ENCODE measurements at regions of chr16 and their contacts with region 1.

Region 1: DNA sequence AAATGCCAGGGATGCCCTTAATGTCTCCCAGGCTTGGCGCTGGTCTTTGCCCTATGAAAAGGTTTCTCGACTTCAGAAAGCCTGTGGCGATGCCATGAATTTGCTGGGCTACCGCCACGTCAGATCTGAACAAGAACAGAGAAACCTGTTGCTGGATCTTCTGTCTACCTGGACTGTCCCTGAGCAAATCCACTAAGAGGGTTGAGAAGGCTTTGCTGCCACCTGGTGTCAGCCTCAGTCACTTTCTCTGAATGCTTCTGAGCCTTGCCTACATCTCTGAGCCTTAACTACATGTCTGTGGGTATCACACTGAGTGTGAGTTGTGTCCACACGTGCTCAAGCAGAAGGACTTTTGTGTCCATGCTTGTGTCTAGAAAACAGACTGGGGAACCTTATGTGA is 11.4 kb downstream of the CHST4 start:
- DNase-seq: peak; percentile 69
- ATAC-seq: peak; percentile 76
- H3K4me3 Mint-ChIP-seq: no peak overlapping the region
- H3K27ac Mint-ChIP-seq: no peak overlapping the region
- H3K4me1 Mint-ChIP-seq: no peaks in the 10 kb centered on the region
- H3K27me3 Mint-ChIP-seq: peaks cover 4% of the 10 kb centered on the region
- CTCF ChIP-seq: peak; percentile 49

Region 2: GRCh38 chr16:71552698-71553451 is 15.2 kb after region 1 on chr16:
- CTCF ChIA-PET with region 1: interaction called, 12 read pairs
- POLR2A ChIA-PET with region 1: no interaction called
- intact Hi-C with region 1: no loop called
- DNase-seq: no peak
- ATAC-seq: no peak
- H3K4me3 Mint-ChIP-seq: no peak overlapping the region
- H3K27ac Mint-ChIP-seq: no peak overlapping the region
- H3K4me1 Mint-ChIP-seq: no peaks in the 10 kb centered on the region
- H3K27me3 Mint-ChIP-seq: peaks cover 8% of the 10 kb centered on the region
- CTCF ChIP-seq: no peak

Region 3: GRCh38 chr16:71572497-71573116 is 35.0 kb after region 1 on chr16:
- CTCF ChIA-PET with region 1: no interaction called
- POLR2A ChIA-PET with region 1: no interaction called
- intact Hi-C with region 1: no loop called
- DNase-seq: no peak
- ATAC-seq: no peak
- H3K4me3 Mint-ChIP-seq: no peak overlapping the region
- H3K27ac Mint-ChIP-seq: no peak overlapping the region
- H3K4me1 Mint-ChIP-seq: no peaks in the 10 kb centered on the region
- H3K27me3 Mint-ChIP-seq: peaks cover 6% of the 10 kb centered on the region
- CTCF ChIP-seq: no peak

Region 4: GRCh38 chr16:71590584-71590983 is 52.9 kb after region 1 on chr16:
- CTCF ChIA-PET with region 1: no interaction called
- POLR2A ChIA-PET with region 1: no interaction called
- intact Hi-C with region 1: no loop called
- DNase-seq: no peak
- ATAC-seq: no peak
- H3K4me3 Mint-ChIP-seq: no peak overlapping the region
- H3K27ac Mint-ChIP-seq: no peak overlapping the region
- H3K4me1 Mint-ChIP-seq: no peaks in the 10 kb centered on the region
- H3K27me3 Mint-ChIP-seq: peaks cover 14% of the 10 kb centered on the region
- CTCF ChIP-seq: no peak